ENCODE measurements at regions of chr2 and their contacts with region 1.

Region 1: GRCh38 chr2:201795607-201796477 is 10.5 kb upstream of the CDK15 start:
- DNase-seq: peak in 1 of 5 donors; percentile 18
- ATAC-seq: peak in 3 of 4 donors; percentile 61 to 69 (median 64)
- H3K4me3 ChIP-seq: no peak overlapping the region
- H3K27ac ChIP-seq: no peak overlapping the region
- H3K4me1 ChIP-seq: no peaks in the 10 kb centered on the region
- H3K27me3 ChIP-seq: peaks cover 0 to 3% (median 0%) of the 10 kb centered on the region in 9 donors
- CTCF ChIP-seq: peak; percentile 41 to 72 (median 62)
- POLR2A ChIP-seq: no peak

Region 2: GRCh38 chr2:201758234-201758633 is 37.6 kb before region 1 on chr2:
- intact Hi-C with region 1: no loop called
- DNase-seq: no peak
- ATAC-seq: no peak
- H3K4me3 ChIP-seq: no peak overlapping the region
- H3K27ac ChIP-seq: no peak overlapping the region
- H3K4me1 ChIP-seq: peaks cover 0 to 7% (median 0%) of the 10 kb centered on the region in 12 donors
- H3K27me3 ChIP-seq: no peaks in the 10 kb centered on the region
- CTCF ChIP-seq: no peak
- POLR2A ChIP-seq: no peak

Region 3: GRCh38 chr2:202056392-202057010 is 260.7 kb after region 1 on chr2:
- intact Hi-C with region 1: loop called in 1 of 10 experiments (anchors 5 kb)
- DNase-seq: no peak
- ATAC-seq: no peak
- H3K4me3 ChIP-seq: no peak overlapping the region
- H3K27ac ChIP-seq: no peak overlapping the region
- H3K4me1 ChIP-seq: peaks cover 0 to 10% (median 0%) of the 10 kb centered on the region in 12 donors
- H3K27me3 ChIP-seq: peaks cover 0 to 13% (median 0%) of the 10 kb centered on the region in 9 donors
- CTCF ChIP-seq: peak in 8 of 12 donors; percentile 11 to 39 (median 28)
- POLR2A ChIP-seq: no peak

Region 4: DNA sequence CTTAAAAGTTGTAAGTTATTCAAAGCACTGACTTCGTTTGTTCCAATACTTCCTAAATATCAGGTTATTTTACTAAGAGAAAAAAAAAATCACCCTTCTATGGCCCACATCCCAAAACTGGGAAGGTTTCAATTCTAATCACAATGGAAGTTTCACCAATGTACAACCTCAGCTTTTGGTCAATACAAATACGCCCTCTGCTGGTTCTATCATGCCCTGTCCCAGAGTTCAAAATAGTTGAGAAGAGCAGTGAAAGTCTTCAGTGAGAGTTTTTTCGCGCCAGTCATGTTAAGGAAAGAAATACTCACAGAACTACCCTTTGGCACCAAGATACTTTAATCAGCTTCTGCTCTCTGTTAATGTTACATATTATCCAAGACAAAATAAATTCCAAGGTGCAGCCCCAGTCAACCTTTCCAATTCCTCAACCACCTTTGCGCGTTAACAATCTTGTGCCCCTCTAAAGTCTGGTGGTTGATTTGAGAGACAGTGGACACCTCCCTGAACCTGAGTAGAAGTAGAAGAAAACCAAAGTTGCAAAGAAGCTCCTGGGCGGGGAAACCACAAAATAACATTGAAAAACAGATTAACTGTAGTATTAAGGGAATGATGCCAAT is 382.6 kb after region 1 on chr2:
- intact Hi-C with region 1: loop called (anchors 1 to 5 kb)
- DNase-seq: peak in 2 of 5 donors; percentile 35 to 40
- ATAC-seq: peak; percentile 51 to 82 (median 77)
- H3K4me3 ChIP-seq: no peak overlapping the region
- H3K27ac ChIP-seq: no peak overlapping the region
- H3K4me1 ChIP-seq: no peaks in the 10 kb centered on the region
- H3K27me3 ChIP-seq: no peaks in the 10 kb centered on the region
- CTCF ChIP-seq: peak; percentile 68 to 91 (median 82)
- POLR2A ChIP-seq: no peak

Region 5: GRCh38 chr2:202184557-202184956 is 388.7 kb after region 1 on chr2:
- intact Hi-C with region 1: loop called in 8 of 10 experiments (anchors 2 to 5 kb)
- DNase-seq: no peak
- ATAC-seq: no peak
- H3K4me3 ChIP-seq: no peak overlapping the region
- H3K27ac ChIP-seq: no peak overlapping the region
- H3K4me1 ChIP-seq: no peaks in the 10 kb centered on the region
- H3K27me3 ChIP-seq: no peaks in the 10 kb centered on the region
- CTCF ChIP-seq: no peak
- POLR2A ChIP-seq: no peak

Measured in heart left ventricle (tissue), 16 donors.